Stomach (tissue), 19 donors: ENCODE measurements at regions of chrX and their contacts with region 1.

Region 1: GRCh38 chrX:49120099-49120498 is 3.4 kb downstream of the GPKOW start:
- DNase-seq: no peak
- H3K4me3 ChIP-seq: no peak overlapping the region
- H3K27ac ChIP-seq: no peak overlapping the region
- H3K4me1 ChIP-seq: peaks cover 0 to 19% (median 13%) of the 10 kb centered on the region in 4 donors
- H3K27me3 ChIP-seq: no peaks in the 10 kb centered on the region
- CTCF ChIP-seq: no peak
- EP300 ChIP-seq: no peak
- POLR2A ChIP-seq: no peak

Region 2: GRCh38 chrX:48747415-48748016 is 372.6 kb before region 1 on chrX:
- intact Hi-C with region 1: no loop called
- DNase-seq: no peak
- H3K4me3 ChIP-seq: no peak overlapping the region
- H3K27ac ChIP-seq: no peak overlapping the region
- H3K4me1 ChIP-seq: no peaks in the 10 kb centered on the region
- H3K27me3 ChIP-seq: no peaks in the 10 kb centered on the region
- CTCF ChIP-seq: no peak
- EP300 ChIP-seq: no peak
- POLR2A ChIP-seq: no peak

Region 3: GRCh38 chrX:49059209-49060191 is 60.6 kb before region 1 on chrX:
- intact Hi-C with region 1: loop called (anchors 10 kb)
- DNase-seq: peak; percentile 38 to 62
- H3K4me3 ChIP-seq: peak overlapping the region; percentile 34 to 52 (median 40)
- H3K27ac ChIP-seq: peak overlapping the region; percentile 68 to 84 (median 77)
- H3K4me1 ChIP-seq: peaks cover 0 to 5% (median 0%) of the 10 kb centered on the region in 4 donors
- H3K27me3 ChIP-seq: peaks cover 0 to 5% (median 0%) of the 10 kb centered on the region in 3 donors
- CTCF ChIP-seq: no peak
- EP300 ChIP-seq: no peak
- POLR2A ChIP-seq: no peak

Region 4: GRCh38 chrX:49172280-49172780 is 52.2 kb after region 1 on chrX:
- intact Hi-C with region 1: no loop called
- DNase-seq: peak; percentile 74 to 86
- H3K4me3 ChIP-seq: peak overlapping the region; percentile 52 to 66 (median 58)
- H3K27ac ChIP-seq: peak overlapping the region; percentile 75 to 92 (median 87)
- H3K4me1 ChIP-seq: peaks cover 4 to 52% (median 35%) of the 10 kb centered on the region in 4 donors
- H3K27me3 ChIP-seq: no peaks in the 10 kb centered on the region
- CTCF ChIP-seq: no peak
- EP300 ChIP-seq: no peak
- POLR2A ChIP-seq: no peak